Endothelial cell of umbilical vein (primary cell): ENCODE measurements at regions of chr16 and their contacts with region 1.

Region 1: GRCh38 chr16:12067714-12068401 is 91.3 kb downstream of the SNX29 start:
- DNase-seq: peak; percentile 80
- H3K4me3 ChIP-seq: no peak overlapping the region
- H3K27ac ChIP-seq: no peak overlapping the region
- H3K4me1 ChIP-seq: peaks cover under 1% of the 10 kb centered on the region
- H3K27me3 ChIP-seq: no peaks in the 10 kb centered on the region
- CTCF ChIP-seq: peak; percentile 82 to 84
- POLR2A ChIP-seq: no peak

Region 2: DNA sequence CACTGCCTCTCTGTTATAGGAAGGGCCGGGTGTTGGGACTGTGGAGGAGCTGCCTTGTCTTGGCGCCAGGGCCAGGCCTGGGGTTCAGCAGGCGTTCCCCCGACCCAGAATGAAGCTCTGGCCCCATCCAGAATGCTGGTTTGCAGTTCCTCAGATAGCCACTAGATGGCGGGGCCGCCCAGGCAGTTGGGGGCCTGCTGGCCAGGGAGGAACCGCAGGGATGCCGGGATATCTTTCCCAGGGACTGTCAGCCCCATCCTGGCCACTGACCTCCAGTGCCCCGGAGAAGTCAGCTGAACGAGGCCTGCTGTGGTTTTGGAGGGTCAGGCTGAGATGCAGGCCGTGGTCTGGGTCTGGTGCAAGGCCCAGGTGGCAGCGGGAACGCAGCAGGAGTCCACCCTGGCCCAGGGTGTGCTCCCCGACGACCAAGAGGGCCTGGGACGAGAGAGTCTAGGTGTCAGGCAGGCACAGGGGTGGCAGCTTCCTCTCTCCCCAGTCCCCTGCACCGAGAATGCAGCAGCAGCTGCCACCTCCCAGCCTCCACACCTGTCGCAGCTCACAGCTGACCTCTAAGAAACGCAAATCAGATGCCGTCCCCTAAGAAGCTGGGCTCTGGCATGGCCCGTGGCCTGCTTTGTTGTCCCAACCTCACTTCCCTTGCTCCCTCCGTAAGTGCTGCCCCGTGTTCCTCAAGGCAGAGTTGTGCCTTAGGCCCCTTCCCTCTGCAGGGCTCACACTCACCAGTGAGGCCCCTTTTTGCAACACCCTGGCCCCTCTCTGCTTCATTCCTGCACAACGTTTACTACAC is 671.4 kb before region 1 on chr16:
- CTCF ChIA-PET with region 1: interaction called, 15 read pairs
- POLR2A ChIA-PET with region 1: no interaction called
- dilution Hi-C with region 1: no loop called
- intact Hi-C with region 1: loop called (anchors 2 kb)
- DNase-seq: peak; percentile 39
- H3K4me3 ChIP-seq: no peak overlapping the region
- H3K27ac ChIP-seq: no peak overlapping the region
- H3K4me1 ChIP-seq: no peaks in the 10 kb centered on the region
- H3K27me3 ChIP-seq: no peaks in the 10 kb centered on the region
- CTCF ChIP-seq: peak; percentile 95 to 96
- POLR2A ChIP-seq: no peak

Region 3: GRCh38 chr16:11871193-11871592 is 196.7 kb before region 1 on chr16:
- CTCF ChIA-PET with region 1: interaction called, 28 read pairs
- POLR2A ChIA-PET with region 1: no interaction called
- dilution Hi-C with region 1: no loop called
- intact Hi-C with region 1: loop called (anchors 1 kb)
- DNase-seq: peak; percentile 34
- H3K4me3 ChIP-seq: no peak overlapping the region
- H3K27ac ChIP-seq: no peak overlapping the region
- H3K4me1 ChIP-seq: peaks cover 4% of the 10 kb centered on the region
- H3K27me3 ChIP-seq: no peaks in the 10 kb centered on the region
- CTCF ChIP-seq: peak in 1 of 2 donors; percentile 11
- POLR2A ChIP-seq: no peak

Region 4: GRCh38 chr16:11915644-11916523 is 152.0 kb before region 1 on chr16 and contains the start of gene GSPT1:
- CTCF ChIA-PET with region 1: interaction called, 24 read pairs
- POLR2A ChIA-PET with region 1: no interaction called
- dilution Hi-C with region 1: no loop called
- intact Hi-C with region 1: loop called (anchors 1 kb)
- DNase-seq: peak; percentile 99
- H3K4me3 ChIP-seq: peak within 1 kb of the TSS; percentile 68 to 96 (median 77)
- H3K27ac ChIP-seq: peak within 1 kb of the TSS; percentile 76
- H3K4me1 ChIP-seq: peaks cover 24% of the 10 kb centered on the region
- H3K27me3 ChIP-seq: peaks cover 0 to 2% of the 10 kb centered on the region in 2 experiments
- CTCF ChIP-seq: peak in 1 of 2 donors; percentile 9
- POLR2A ChIP-seq: peak; percentile 76
- total RNA-seq, gene GSPT1: 137 and 152 TPM in 2 replicates

Region 5: DNA sequence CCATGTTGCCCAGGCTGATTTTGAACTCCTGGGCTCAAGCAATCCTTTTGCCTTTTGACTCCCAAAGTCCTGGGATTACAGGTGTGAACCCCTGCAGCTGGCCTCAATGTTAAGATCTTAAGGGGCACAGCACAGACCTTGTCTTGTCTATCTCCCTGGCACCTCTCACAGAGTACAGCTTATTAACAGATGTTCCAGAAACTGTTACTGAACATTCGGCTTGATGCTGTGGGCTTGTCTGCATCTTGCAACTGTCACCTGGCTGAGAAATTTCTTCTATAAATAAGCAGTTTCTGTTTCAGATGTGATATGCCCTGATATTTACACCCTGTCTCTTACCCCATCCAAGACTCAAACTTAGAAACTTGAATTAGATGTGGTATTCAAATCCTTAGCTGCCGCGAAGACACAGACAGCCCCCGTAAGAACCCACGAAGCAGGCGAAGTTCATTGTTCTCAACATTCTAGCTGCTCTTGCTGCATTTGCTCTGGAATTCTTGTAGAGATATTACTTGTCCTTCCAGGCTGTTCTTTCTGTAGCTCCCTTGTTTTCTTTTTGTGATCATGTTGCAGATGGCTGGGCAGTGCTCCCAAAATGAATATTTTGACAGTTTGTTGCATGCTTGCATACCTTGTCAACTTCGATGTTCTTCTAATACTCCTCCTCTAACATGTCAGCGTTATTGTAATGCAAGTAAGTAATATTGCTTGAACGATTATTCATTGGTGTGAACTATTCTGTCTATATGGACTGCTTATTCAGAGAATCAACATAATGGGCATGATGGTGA is 102.9 kb before region 1 on chr16 and contains the start of gene TNFRSF17:
- CTCF ChIA-PET with region 1: interaction called, 22 read pairs
- POLR2A ChIA-PET with region 1: no interaction called
- dilution Hi-C with region 1: no loop called
- intact Hi-C with region 1: no loop called
- DNase-seq: no peak
- H3K4me3 ChIP-seq: no peak within 1 kb of the TSS
- H3K27ac ChIP-seq: no peak within 1 kb of the TSS
- H3K4me1 ChIP-seq: no peaks in the 10 kb centered on the region
- H3K27me3 ChIP-seq: no peaks in the 10 kb centered on the region
- CTCF ChIP-seq: no peak
- POLR2A ChIP-seq: no peak
- total RNA-seq, gene TNFRSF17: not detected in 2 replicates

Region 6: DNA sequence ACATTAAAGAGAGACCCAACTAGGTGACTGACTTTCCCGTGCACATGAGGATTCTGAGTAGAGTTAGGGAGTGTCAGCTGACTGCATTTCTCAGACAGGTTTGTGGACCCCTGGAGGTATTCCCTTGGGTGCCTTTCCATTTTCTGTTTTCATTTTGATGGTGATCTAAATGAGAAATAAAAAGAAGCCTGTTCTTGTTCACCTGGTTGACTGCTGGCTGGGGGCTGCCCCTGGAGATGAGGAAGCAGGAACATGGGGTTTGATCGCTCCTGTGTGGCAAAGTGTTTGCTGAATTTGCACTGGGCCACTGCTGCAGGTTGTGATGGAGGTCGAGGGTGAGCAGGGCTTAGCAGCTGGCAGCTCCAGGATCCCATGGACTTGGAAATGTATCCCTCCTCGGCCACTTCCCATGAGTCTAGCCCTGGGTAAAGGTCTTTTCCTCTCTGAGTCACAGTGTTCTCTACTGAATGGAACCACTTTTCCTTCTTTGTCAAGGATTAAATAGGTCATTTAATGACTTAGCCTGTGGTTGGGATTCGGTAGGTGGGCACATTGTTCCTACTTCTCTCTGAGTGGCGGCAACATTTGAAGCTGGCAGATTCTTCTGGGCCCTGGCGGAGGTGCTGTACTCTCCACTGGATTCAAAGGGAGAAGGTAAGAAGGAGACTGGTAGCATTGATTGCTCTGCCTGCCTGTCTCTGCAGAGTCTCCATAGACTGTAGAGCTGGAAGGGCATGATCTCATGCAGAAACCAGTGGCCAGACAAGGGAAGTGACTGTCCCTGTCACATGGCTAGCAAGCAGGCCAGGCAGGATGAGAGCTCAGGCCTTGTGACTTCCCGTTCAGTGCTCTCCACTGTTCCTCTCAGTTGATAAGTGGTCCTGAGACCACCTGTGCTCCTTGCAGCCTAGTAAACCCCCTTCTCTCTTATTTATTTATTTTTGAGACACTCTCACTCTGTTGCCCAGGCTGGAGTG is 73.4 kb before region 1 on chr16:
- CTCF ChIA-PET with region 1: interaction called, 10 read pairs
- POLR2A ChIA-PET with region 1: no interaction called
- dilution Hi-C with region 1: no loop called
- intact Hi-C with region 1: no loop called
- DNase-seq: peak; percentile 68
- H3K4me3 ChIP-seq: no peak overlapping the region
- H3K27ac ChIP-seq: peak overlapping the region; percentile 83
- H3K4me1 ChIP-seq: peaks cover 11% of the 10 kb centered on the region
- H3K27me3 ChIP-seq: no peaks in the 10 kb centered on the region
- CTCF ChIP-seq: no peak
- POLR2A ChIP-seq: no peak

Region 7: GRCh38 chr16:12087901-12088421 is 20.1 kb after region 1 on chr16:
- CTCF ChIA-PET with region 1: interaction called, 13 read pairs
- POLR2A ChIA-PET with region 1: no interaction called
- dilution Hi-C with region 1: no loop called
- intact Hi-C with region 1: no loop called
- DNase-seq: no peak
- H3K4me3 ChIP-seq: no peak overlapping the region
- H3K27ac ChIP-seq: no peak overlapping the region
- H3K4me1 ChIP-seq: peaks cover 20% of the 10 kb centered on the region
- H3K27me3 ChIP-seq: no peaks in the 10 kb centered on the region
- CTCF ChIP-seq: no peak
- POLR2A ChIP-seq: no peak